Naive thymus-derived CD4-positive, alpha-beta T cell (primary cell): ENCODE measurements at regions of chr1 and their contacts with region 1.

Region 1: DNA sequence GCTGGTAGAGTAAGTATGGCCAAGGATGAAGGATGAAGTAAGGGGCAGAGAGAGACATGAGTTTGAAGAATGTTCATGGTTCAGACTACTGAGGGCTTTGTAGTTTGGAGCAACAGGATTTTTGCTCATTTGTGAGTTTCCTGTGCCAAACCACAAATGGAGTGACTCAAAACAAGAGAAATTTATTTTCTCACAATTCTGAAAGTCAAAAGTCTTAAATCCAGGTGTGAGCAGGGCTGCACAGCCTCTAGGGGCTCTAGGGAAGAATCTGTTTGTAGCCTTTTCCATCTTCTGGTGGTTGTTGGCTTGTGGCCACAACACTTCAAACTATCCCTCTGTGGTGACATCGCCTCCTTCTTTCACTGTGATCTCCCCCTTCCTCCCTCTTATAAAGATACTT is 58.9 kb downstream of the RHOU start:
- DNase-seq: peak in 7 of 9 donors; percentile 6 to 49 (median 29)
- ATAC-seq: peak; percentile 41
- H3K4me3 ChIP-seq: peak overlapping the region; percentile 22
- H3K4me3 Mint-ChIP-seq: no peak overlapping the region
- H3K27ac ChIP-seq: no peak overlapping the region
- H3K27ac Mint-ChIP-seq: no peak overlapping the region
- H3K4me1 ChIP-seq: peaks cover 48 to 50% of the 10 kb centered on the region in 2 donors
- H3K4me1 Mint-ChIP-seq: peaks cover 16 to 37% (median 25%) of the 10 kb centered on the region in 7 donors
- H3K27me3 ChIP-seq: no peaks in the 10 kb centered on the region
- H3K27me3 Mint-ChIP-seq: no peaks in the 10 kb centered on the region

Region 2: GRCh38 chr1:228555074-228555989 is 238.8 kb before region 1 on chr1:
- CTCF ChIA-PET with region 1: no interaction called
- POLR2A ChIA-PET with region 1: no interaction called
- intact Hi-C with region 1: no loop called
- DNase-seq: peak in 7 of 9 donors; percentile 23 to 65 (median 31)
- ATAC-seq: peak; percentile 57
- H3K4me3 ChIP-seq: no peak overlapping the region
- H3K4me3 Mint-ChIP-seq: no peak overlapping the region
- H3K27ac ChIP-seq: no peak overlapping the region
- H3K27ac Mint-ChIP-seq: peak overlapping the region in 2 of 9 donors; percentile 56 to 69
- H3K4me1 ChIP-seq: no peaks in the 10 kb centered on the region
- H3K4me1 Mint-ChIP-seq: peaks cover 0 to 1% (median 0%) of the 10 kb centered on the region in 7 donors
- H3K27me3 ChIP-seq: no peaks in the 10 kb centered on the region
- H3K27me3 Mint-ChIP-seq: peaks cover 0 to 4% (median 2%) of the 10 kb centered on the region in 5 donors

Region 3: DNA sequence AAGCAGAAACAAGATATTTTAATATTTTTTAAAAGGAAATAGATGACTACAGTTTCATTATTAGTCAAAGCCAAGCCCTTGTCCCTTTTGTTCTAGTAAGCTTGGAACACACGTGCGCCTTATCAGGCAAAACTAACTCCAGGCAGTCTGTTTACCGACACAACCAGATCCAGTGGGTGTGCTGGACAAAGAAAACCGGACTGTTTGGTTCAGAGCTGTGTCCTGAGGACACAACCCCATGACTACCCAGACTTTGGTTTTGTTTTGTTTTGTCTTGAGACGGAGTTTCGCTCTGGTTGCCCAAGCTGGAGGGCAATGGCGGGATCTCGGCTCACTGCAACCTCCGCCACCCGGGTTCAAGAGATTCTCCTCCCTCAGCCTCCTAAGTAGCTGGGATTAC is 72.8 kb before region 1 on chr1:
- CTCF ChIA-PET with region 1: no interaction called
- POLR2A ChIA-PET with region 1: no interaction called
- intact Hi-C with region 1: no loop called
- DNase-seq: no peak
- ATAC-seq: no peak
- H3K4me3 ChIP-seq: no peak overlapping the region
- H3K4me3 Mint-ChIP-seq: no peak overlapping the region
- H3K27ac ChIP-seq: no peak overlapping the region
- H3K27ac Mint-ChIP-seq: no peak overlapping the region
- H3K4me1 ChIP-seq: no peaks in the 10 kb centered on the region
- H3K4me1 Mint-ChIP-seq: no peaks in the 10 kb centered on the region
- H3K27me3 ChIP-seq: no peaks in the 10 kb centered on the region
- H3K27me3 Mint-ChIP-seq: peaks cover 0 to 17% (median 11%) of the 10 kb centered on the region in 5 donors

Region 4: GRCh38 chr1:228804671-228805413 is 10.7 kb after region 1 on chr1:
- CTCF ChIA-PET with region 1: no interaction called
- POLR2A ChIA-PET with region 1: no interaction called
- intact Hi-C with region 1: loop called in 1 of 2 experiments (anchors 1 kb)
- DNase-seq: no peak
- ATAC-seq: peak; percentile 43
- H3K4me3 ChIP-seq: peak overlapping the region; percentile 25
- H3K4me3 Mint-ChIP-seq: peak overlapping the region; percentile 39 to 77 (median 66)
- H3K27ac ChIP-seq: no peak overlapping the region
- H3K27ac Mint-ChIP-seq: peak overlapping the region; percentile 35 to 90 (median 80)
- H3K4me1 ChIP-seq: peaks cover 6 to 13% of the 10 kb centered on the region in 2 donors
- H3K4me1 Mint-ChIP-seq: peaks cover 20 to 76% (median 41%) of the 10 kb centered on the region in 7 donors
- H3K27me3 ChIP-seq: no peaks in the 10 kb centered on the region
- H3K27me3 Mint-ChIP-seq: no peaks in the 10 kb centered on the region

Region 5: GRCh38 chr1:228810878-228811711 is 16.9 kb after region 1 on chr1:
- CTCF ChIA-PET with region 1: no interaction called
- POLR2A ChIA-PET with region 1: no interaction called
- intact Hi-C with region 1: loop called in 1 of 2 experiments (anchors 1 kb)
- DNase-seq: peak in 1 of 9 donors; percentile 22
- ATAC-seq: no peak
- H3K4me3 ChIP-seq: no peak overlapping the region
- H3K4me3 Mint-ChIP-seq: peak overlapping the region in 2 of 10 donors; percentile 28 to 69
- H3K27ac ChIP-seq: no peak overlapping the region
- H3K27ac Mint-ChIP-seq: peak overlapping the region; percentile 17 to 95 (median 52)
- H3K4me1 ChIP-seq: peaks cover 7 to 11% of the 10 kb centered on the region in 2 donors
- H3K4me1 Mint-ChIP-seq: peaks cover 22 to 67% (median 31%) of the 10 kb centered on the region in 7 donors
- H3K27me3 ChIP-seq: no peaks in the 10 kb centered on the region
- H3K27me3 Mint-ChIP-seq: no peaks in the 10 kb centered on the region

Region 6: GRCh38 chr1:228825840-228826484 is 31.8 kb after region 1 on chr1:
- CTCF ChIA-PET with region 1: no interaction called
- POLR2A ChIA-PET with region 1: no interaction called
- intact Hi-C with region 1: loop called in 1 of 2 experiments (anchors 5 kb)
- DNase-seq: no peak
- ATAC-seq: no peak
- H3K4me3 ChIP-seq: no peak overlapping the region
- H3K4me3 Mint-ChIP-seq: peak overlapping the region in 3 of 10 donors; percentile 3 to 11 (median 10)
- H3K27ac ChIP-seq: no peak overlapping the region
- H3K27ac Mint-ChIP-seq: peak overlapping the region in 1 of 9 donors; percentile 81
- H3K4me1 ChIP-seq: peaks cover 4 to 12% of the 10 kb centered on the region in 2 donors
- H3K4me1 Mint-ChIP-seq: peaks cover 9 to 42% (median 13%) of the 10 kb centered on the region in 7 donors
- H3K27me3 ChIP-seq: no peaks in the 10 kb centered on the region
- H3K27me3 Mint-ChIP-seq: peaks cover 0 to 12% (median 0%) of the 10 kb centered on the region in 5 donors

Region 7: GRCh38 chr1:228913626-228914414 is 119.6 kb after region 1 on chr1:
- CTCF ChIA-PET with region 1: no interaction called
- POLR2A ChIA-PET with region 1: no interaction called
- intact Hi-C with region 1: no loop called
- DNase-seq: no peak
- ATAC-seq: no peak
- H3K4me3 ChIP-seq: no peak overlapping the region
- H3K4me3 Mint-ChIP-seq: no peak overlapping the region
- H3K27ac ChIP-seq: no peak overlapping the region
- H3K27ac Mint-ChIP-seq: no peak overlapping the region
- H3K4me1 ChIP-seq: no peaks in the 10 kb centered on the region
- H3K4me1 Mint-ChIP-seq: peaks cover 0 to 3% (median 0%) of the 10 kb centered on the region in 7 donors
- H3K27me3 ChIP-seq: no peaks in the 10 kb centered on the region
- H3K27me3 Mint-ChIP-seq: peaks cover 0 to 2% (median 0%) of the 10 kb centered on the region in 5 donors